GM12878 (cell line): ENCODE measurements at regions of chr9 and their contacts with region 1.

Region 1: GRCh38 chr9:94153905-94154304 is 69.6 kb downstream of the PTPDC1 start:
- DNase-seq: no peak
- ATAC-seq: no peak; the same call in 2 of the 3 replicates
- H3K4me3 ChIP-seq: no peak overlapping the region
- H3K27ac ChIP-seq: no peak overlapping the region
- H3K4me1 ChIP-seq: no peaks in the 10 kb centered on the region
- H3K27me3 ChIP-seq: no peaks in the 10 kb centered on the region
- CTCF ChIP-seq: no peak
- EP300 ChIP-seq: no peak
- POLR2A ChIP-seq: no peak
- RAD21 ChIP-seq: no peak

Region 2: DNA sequence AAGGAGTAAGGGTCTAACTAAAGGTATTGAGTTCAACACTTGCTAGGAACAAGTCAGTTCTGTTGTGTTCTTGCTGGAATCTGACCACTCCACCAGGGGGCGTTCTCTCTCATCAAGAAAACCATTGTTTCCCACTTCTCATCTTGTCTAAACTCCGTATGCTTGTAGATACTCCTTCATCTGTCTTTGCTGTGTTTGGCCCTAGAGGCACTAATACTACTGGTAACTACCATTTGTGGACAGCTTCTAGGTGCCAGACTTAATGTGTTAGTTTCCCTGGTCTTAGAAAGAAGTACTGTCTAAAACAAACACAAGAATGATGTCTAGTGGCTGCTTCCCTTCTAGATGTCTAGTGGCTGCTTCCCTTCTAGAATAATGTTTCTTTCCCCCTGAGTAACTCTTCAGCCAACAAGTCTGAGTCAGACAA is 88.4 kb before region 1 on chr9:
- CTCF ChIA-PET with region 1: interaction called, 3 read pairs
- POLR2A ChIA-PET with region 1: no interaction called
- RAD21 ChIA-PET with region 1: no interaction called
- SMC1A ChIA-PET with region 1: interaction called, 3 read pairs
- in situ Hi-C with region 1: loop called (anchors 5 kb)
- intact Hi-C with region 1: no loop called
- DNase-seq: peak; percentile 40
- ATAC-seq: peak; percentile 86
- H3K4me3 ChIP-seq: no peak overlapping the region
- H3K27ac ChIP-seq: no peak overlapping the region
- H3K4me1 ChIP-seq: no peaks in the 10 kb centered on the region
- H3K27me3 ChIP-seq: no peaks in the 10 kb centered on the region
- CTCF ChIP-seq: peak; percentile 72 to 83 (median 74)
- EP300 ChIP-seq: no peak
- POLR2A ChIP-seq: no peak
- RAD21 ChIP-seq: peak; percentile 87

Region 3: DNA sequence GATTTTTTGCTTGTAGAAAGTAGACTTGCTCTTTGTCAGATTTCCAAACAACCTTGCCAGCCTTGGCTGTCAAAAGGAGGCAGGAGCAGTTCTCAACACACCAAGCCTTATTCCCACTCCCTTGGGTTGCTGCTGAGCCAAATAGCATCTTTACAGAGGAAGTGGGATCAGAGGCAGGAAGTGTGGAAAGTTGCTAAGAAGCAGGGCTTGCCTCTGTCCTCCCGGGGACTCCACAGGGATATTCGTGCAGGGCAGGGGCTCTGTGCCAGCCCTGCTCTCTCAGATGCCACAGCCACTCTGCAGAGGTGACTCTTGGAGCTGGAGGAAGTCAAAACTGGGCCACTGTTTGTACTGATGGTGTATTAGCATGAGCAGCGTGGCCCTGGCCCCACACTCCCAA is 45.3 kb before region 1 on chr9:
- CTCF ChIA-PET with region 1: no interaction called
- POLR2A ChIA-PET with region 1: no interaction called
- RAD21 ChIA-PET with region 1: no interaction called
- SMC1A ChIA-PET with region 1: no interaction called
- in situ Hi-C with region 1: no loop called
- intact Hi-C with region 1: no loop called
- DNase-seq: no peak
- ATAC-seq: no peak
- H3K4me3 ChIP-seq: no peak overlapping the region
- H3K27ac ChIP-seq: no peak overlapping the region
- H3K4me1 ChIP-seq: no peaks in the 10 kb centered on the region
- H3K27me3 ChIP-seq: no peaks in the 10 kb centered on the region
- CTCF ChIP-seq: no peak
- EP300 ChIP-seq: no peak
- POLR2A ChIP-seq: no peak
- RAD21 ChIP-seq: no peak